AG04450 (cell line): ENCODE measurements at regions of chr9 and their contacts with region 1.

Region 1: DNA sequence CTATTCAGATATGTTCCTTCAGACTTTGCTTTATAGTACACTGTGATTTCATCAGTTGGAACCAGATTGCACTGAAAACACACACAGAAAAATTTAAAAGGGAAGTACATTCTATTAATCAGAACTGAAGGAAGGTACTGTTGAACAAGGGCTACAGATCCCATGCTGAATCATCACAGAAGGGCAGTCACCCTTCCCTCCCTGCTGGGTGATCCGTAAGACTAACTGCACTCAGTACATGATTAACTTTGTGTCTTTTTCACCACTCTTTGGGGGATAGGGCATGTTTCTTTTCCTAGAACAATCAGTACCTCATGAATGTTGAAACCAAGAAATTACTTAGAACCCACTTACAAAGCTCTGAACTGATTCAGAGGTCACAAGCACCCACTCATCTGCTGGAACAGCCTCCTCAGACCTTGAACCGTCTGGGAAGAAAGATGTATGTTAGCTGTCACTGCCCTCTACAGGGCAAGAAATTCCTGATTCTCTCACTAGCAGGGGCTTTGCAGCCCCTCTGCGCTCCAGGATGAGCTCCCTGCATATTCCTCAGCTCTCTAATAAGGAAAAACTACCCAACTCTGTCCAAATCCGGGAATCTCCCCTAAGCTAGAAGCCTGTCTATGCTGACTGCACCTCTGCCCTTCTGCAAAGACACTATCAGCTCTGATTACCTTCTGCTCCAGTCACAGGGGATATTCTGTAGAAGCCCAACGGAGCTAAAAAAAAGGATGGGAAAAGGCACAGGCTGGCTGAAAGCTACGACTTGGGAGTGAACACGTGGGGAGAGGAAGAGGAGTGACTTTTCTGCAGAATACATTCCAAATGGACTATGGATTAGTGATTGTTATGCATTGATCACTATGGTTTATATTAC is 51.0 kb downstream of the IARS1 start:
- DNase-seq: peak; percentile 39
- H3K4me3 ChIP-seq: no peak overlapping the region
- H3K27ac ChIP-seq: peak overlapping the region; percentile 81
- H3K27me3 ChIP-seq: no peaks in the 10 kb centered on the region
- CTCF ChIP-seq: peak; percentile 62

Region 2: DNA sequence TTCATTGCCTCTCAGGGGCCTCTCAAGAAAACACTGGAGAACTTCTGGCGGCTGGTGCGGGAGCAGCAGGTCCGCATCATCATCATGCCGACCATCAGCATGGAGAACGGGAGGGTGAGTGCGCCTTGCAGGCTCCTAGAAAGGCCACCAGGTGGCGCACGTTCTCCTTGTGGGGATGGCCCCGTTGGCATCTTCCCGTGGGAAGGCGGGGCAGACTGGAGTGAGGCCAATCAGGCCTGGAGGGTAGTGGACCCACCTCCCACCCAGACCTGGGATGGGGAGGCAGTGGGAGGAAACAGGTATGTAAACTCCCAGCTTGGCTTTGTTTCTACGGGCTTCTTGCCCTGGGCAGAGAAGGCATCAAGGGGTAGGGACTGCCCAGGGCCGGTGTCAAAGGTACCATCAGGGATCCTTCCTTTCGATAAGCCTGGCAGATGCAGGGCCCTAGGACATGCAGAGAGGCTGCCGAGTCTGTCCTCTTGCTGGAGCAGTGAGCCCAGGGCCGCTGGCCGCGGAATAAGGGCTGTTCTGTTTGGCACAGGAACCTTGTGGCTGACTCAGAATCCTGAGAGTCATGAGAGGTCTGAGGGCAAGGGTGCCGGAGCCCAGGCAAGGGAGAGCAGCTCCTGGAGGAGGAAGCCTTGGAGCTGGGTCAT is 108.4 kb before region 1 on chr9:
- CTCF ChIA-PET with region 1: interaction called, 370 read pairs
- POLR2A ChIA-PET with region 1: interaction called, 15 read pairs
- DNase-seq: peak; percentile 63
- H3K4me3 ChIP-seq: peak overlapping the region; percentile 27
- H3K27ac ChIP-seq: peak overlapping the region; percentile 70
- H3K27me3 ChIP-seq: no peaks in the 10 kb centered on the region
- CTCF ChIP-seq: peak; percentile 94

Region 3: GRCh38 chr9:92147030-92147851 is 95.3 kb before region 1 on chr9:
- CTCF ChIA-PET with region 1: interaction called, 370 read pairs
- POLR2A ChIA-PET with region 1: interaction called, 14 read pairs
- DNase-seq: peak; percentile 85
- H3K4me3 ChIP-seq: no peak overlapping the region
- H3K27ac ChIP-seq: peak overlapping the region; percentile 91
- H3K27me3 ChIP-seq: no peaks in the 10 kb centered on the region
- CTCF ChIP-seq: peak; percentile 46

Region 4: GRCh38 chr9:92206488-92206887 is 36.0 kb before region 1 on chr9:
- CTCF ChIA-PET with region 1: no interaction called
- POLR2A ChIA-PET with region 1: no interaction called
- DNase-seq: no peak
- H3K4me3 ChIP-seq: no peak overlapping the region
- H3K27ac ChIP-seq: peak overlapping the region; percentile 11
- H3K27me3 ChIP-seq: no peaks in the 10 kb centered on the region
- CTCF ChIP-seq: no peak

Region 5: GRCh38 chr9:92232190-92232589 is 10.3 kb before region 1 on chr9:
- CTCF ChIA-PET with region 1: interaction called, 11 read pairs
- POLR2A ChIA-PET with region 1: no interaction called
- DNase-seq: no peak
- H3K4me3 ChIP-seq: no peak overlapping the region
- H3K27ac ChIP-seq: no peak overlapping the region
- H3K27me3 ChIP-seq: no peaks in the 10 kb centered on the region
- CTCF ChIP-seq: no peak